Caco-2 (cell line): ENCODE measurements at regions of chr7 and their contacts with region 1.

Region 1: DNA sequence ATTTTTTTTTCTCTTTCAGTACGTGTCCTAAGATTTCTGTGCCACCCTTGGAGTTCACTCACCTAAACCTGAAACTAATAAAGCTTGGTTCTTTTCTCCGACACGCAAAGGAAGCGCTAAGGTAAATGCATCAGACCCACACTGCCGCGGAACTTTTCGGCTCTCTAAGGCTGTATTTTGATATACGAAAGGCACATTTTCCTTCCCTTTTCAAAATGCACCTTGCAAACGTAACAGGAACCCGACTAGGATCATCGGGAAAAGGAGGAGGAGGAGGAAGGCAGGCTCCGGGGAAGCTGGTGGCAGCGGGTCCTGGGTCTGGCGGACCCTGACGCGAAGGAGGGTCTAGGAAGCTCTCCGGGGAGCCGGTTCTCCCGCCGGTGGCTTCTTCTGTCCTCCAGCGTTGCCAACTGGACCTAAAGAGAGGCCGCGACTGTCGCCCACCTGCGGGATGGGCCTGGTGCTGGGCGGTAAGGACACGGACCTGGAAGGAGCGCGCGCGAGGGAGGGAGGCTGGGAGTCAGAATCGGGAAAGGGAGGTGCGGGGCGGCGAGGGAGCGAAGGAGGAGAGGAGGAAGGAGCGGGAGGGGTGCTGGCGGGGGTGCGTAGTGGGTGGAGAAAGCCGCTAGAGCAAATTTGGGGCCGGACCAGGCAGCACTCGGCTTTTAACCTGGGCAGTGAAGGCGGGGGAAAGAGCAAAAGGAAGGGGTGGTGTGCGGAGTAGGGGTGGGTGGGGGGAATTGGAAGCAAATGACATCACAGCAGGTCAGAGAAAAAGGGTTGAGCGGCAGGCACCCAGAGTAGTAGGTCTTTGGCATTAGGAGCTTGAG is at the start of gene CFTR:
- DNase-seq: peak; percentile 72 to 79
- H3K4me3 ChIP-seq: peak within 1 kb of the TSS; percentile 82
- H3K4me3 Mint-ChIP-seq: peak within 1 kb of the TSS; percentile 93
- H3K27ac Mint-ChIP-seq: peak within 1 kb of the TSS; percentile 87
- H3K4me1 ChIP-seq: peaks cover 25% of the 10 kb centered on the region; the same call in 1 of the 2 replicates
- H3K4me1 Mint-ChIP-seq: peaks cover 28% of the 10 kb centered on the region
- H3K27me3 ChIP-seq: no peaks in the 10 kb centered on the region
- H3K27me3 Mint-ChIP-seq: no peaks in the 10 kb centered on the region
- CTCF ChIP-seq: no peak
- total RNA-seq, gene CFTR: 130 and 132 TPM in 2 replicates

Region 2: DNA sequence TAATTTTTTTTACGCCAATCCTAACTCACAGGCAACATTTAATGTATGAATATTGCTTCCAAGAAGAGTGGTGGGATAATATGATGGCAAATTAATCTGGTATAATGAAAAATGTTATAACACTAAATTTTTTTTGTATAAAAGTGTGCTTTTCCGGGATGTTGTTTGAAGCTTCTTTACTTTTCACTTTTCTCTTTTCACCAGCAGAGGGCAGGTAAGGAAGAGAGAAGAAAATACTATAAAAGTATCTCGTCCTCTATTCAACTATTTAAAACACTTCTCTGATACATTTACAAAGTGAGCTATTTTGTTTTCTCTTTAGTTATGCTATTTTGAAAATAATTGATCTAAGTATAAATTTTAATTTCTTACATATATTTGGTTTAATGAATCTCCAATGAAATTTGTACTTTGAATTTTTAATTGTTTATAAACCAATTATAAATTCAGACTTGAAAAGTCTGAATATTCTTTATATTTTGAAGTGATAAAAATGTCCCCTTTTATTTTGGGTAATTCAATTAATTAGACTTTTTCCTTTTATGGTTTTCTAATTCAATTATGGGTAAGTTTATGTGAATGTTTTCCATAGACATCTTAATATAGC is 20.4 kb before region 1 on chr7:
- CTCF ChIA-PET with region 1: interaction called, 8 read pairs
- POLR2A ChIA-PET with region 1: interaction called, 3 read pairs
- intact Hi-C with region 1: loop called (anchors 1 kb)
- DNase-seq: peak in 1 of 2 experiments; percentile 30
- H3K4me3 ChIP-seq: no peak overlapping the region
- H3K4me3 Mint-ChIP-seq: no peak overlapping the region
- H3K27ac Mint-ChIP-seq: no peak overlapping the region
- H3K4me1 ChIP-seq: 0 out of 2 replicates have a peak, but pooled peaks cover 2% of the 10 kb centered on the region
- H3K4me1 Mint-ChIP-seq: no peaks in the 10 kb centered on the region
- H3K27me3 ChIP-seq: no peaks in the 10 kb centered on the region
- H3K27me3 Mint-ChIP-seq: no peaks in the 10 kb centered on the region
- CTCF ChIP-seq: peak; percentile 65 to 71

Region 3: DNA sequence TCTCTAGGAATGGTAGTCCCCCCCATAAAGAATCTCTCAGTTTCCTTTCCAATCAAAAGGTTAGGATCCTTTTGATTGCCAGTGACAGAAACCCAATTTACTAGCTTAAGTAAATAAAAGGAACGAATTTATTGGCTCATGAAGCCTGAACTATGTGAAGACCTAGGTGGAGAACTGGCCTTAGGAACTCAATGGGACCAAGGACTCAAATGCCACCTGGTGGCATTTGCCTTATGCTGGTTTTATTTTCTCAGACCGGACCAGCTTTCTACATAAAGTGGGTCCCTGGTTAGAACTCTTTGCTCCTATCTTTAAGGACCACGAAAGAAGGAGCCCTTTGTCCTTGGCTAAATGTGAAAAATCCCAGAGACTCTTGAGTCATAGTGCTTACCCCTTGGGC is 25.8 kb after region 1 on chr7:
- CTCF ChIA-PET with region 1: no interaction called
- POLR2A ChIA-PET with region 1: no interaction called
- intact Hi-C with region 1: loop called (anchors 2 kb)
- DNase-seq: no peak
- H3K4me3 ChIP-seq: no peak overlapping the region
- H3K4me3 Mint-ChIP-seq: no peak overlapping the region
- H3K27ac Mint-ChIP-seq: no peak overlapping the region
- H3K4me1 ChIP-seq: peaks cover 14% of the 10 kb centered on the region
- H3K4me1 Mint-ChIP-seq: peaks cover 9% of the 10 kb centered on the region
- H3K27me3 ChIP-seq: no peaks in the 10 kb centered on the region
- H3K27me3 Mint-ChIP-seq: no peaks in the 10 kb centered on the region
- CTCF ChIP-seq: no peak

Region 4: DNA sequence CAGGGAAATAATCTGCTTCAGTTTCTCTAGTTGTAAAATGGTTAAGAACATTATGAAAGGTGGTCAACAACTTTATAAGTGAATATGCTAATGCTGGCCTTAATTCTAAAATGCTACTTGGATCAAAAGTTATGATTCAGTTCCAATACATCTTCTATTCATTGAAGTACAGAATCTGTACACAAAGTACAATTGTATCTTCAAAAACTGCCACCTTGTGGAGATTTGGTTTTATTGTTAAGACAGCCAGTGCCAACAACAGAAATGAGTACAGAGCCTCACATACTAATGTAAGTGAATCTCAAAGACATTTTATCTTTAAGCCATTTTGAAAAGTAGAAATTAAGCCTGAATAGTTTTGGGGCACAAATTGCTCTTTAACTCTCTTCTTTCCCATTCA is 194.4 kb after region 1 on chr7:
- CTCF ChIA-PET with region 1: no interaction called
- POLR2A ChIA-PET with region 1: interaction called, 3 read pairs
- intact Hi-C with region 1: loop called (anchors 2 kb)
- DNase-seq: peak in 1 of 2 experiments; percentile 39
- H3K4me3 ChIP-seq: no peak overlapping the region
- H3K4me3 Mint-ChIP-seq: peak overlapping the region; percentile 65
- H3K27ac Mint-ChIP-seq: peak overlapping the region; percentile 87
- H3K4me1 ChIP-seq: peaks cover 60% of the 10 kb centered on the region
- H3K4me1 Mint-ChIP-seq: peaks cover 59% of the 10 kb centered on the region
- H3K27me3 ChIP-seq: no peaks in the 10 kb centered on the region
- H3K27me3 Mint-ChIP-seq: no peaks in the 10 kb centered on the region
- CTCF ChIP-seq: peak; percentile 22 to 46